WTC11 (cell line): ENCODE measurements at regions of chr19 and their contacts with region 1.

Region 1: GRCh38 chr19:17327651-17328516 is 6.8 kb downstream of the ANO8 start:
- DNase-seq: peak; percentile 93
- ATAC-seq: peak; percentile 72
- H3K4me3 Mint-ChIP-seq: peak overlapping the region; percentile 84
- H3K27ac Mint-ChIP-seq: peak overlapping the region; percentile 98
- H3K4me1 Mint-ChIP-seq: peaks cover 16% of the 10 kb centered on the region
- H3K27me3 Mint-ChIP-seq: peaks cover 5% of the 10 kb centered on the region
- CTCF ChIP-seq: 0 out of 2 replicates have a peak, but pooled peaks have one; percentile 17

Region 2: GRCh38 chr19:17305517-17306284 is 22.2 kb before region 1 on chr19 and contains the start of gene MRPL34:
- CTCF ChIA-PET with region 1: interaction called, 35 read pairs
- POLR2A ChIA-PET with region 1: interaction called, 11 read pairs
- DNase-seq: peak; percentile 99
- ATAC-seq: peak; percentile 51
- H3K4me3 Mint-ChIP-seq: peak within 1 kb of the TSS; percentile 89
- H3K27ac Mint-ChIP-seq: peak within 1 kb of the TSS; percentile 91
- H3K4me1 Mint-ChIP-seq: peaks cover 45% of the 10 kb centered on the region
- H3K27me3 Mint-ChIP-seq: no peaks in the 10 kb centered on the region
- CTCF ChIP-seq: no peak; the same call in 1 of the 2 replicates
- total RNA-seq, gene MRPL34: 117 to 130 TPM (median 122 TPM) in 3 replicates

Region 3: DNA sequence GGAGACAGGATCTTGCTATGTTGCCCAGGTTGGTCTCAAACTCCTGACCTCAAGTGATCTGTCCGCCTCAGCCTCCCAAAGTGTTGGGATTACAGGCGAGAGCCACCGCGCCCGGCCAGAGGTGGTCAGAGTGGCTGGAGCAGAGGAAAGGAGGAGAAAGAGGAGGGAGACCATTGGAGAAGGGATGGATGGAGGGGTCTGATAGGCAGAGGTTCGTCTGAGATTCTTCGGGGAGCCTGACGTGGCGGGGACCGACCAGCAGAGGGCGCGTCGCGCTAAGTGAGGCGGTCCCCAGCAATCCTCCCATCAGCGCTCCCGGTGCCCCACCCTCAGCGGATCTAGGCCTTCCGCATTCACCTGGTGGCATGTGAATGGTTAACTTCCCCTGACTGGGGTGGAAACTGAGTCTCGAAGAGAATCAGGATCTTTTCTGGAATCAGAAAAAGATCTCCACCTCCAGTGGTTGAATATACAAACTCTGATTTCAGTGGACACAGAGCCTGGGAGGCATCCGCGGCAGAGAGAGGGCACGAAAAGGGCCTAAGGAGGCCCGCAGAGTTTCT is 18.3 kb after region 1 on chr19:
- CTCF ChIA-PET with region 1: interaction called, 19 read pairs
- POLR2A ChIA-PET with region 1: no interaction called
- DNase-seq: peak; percentile 92
- ATAC-seq: peak; percentile 90
- H3K4me3 Mint-ChIP-seq: no peak overlapping the region
- H3K27ac Mint-ChIP-seq: peak overlapping the region; percentile 90
- H3K4me1 Mint-ChIP-seq: peaks cover 20% of the 10 kb centered on the region
- H3K27me3 Mint-ChIP-seq: no peaks in the 10 kb centered on the region; the same call in 1 of the 2 replicates
- CTCF ChIP-seq: peak; percentile 96